Common myeloid progenitor, CD34-positive (primary cell): ENCODE measurements at regions of chr6 and their contacts with region 1.

Region 1: DNA sequence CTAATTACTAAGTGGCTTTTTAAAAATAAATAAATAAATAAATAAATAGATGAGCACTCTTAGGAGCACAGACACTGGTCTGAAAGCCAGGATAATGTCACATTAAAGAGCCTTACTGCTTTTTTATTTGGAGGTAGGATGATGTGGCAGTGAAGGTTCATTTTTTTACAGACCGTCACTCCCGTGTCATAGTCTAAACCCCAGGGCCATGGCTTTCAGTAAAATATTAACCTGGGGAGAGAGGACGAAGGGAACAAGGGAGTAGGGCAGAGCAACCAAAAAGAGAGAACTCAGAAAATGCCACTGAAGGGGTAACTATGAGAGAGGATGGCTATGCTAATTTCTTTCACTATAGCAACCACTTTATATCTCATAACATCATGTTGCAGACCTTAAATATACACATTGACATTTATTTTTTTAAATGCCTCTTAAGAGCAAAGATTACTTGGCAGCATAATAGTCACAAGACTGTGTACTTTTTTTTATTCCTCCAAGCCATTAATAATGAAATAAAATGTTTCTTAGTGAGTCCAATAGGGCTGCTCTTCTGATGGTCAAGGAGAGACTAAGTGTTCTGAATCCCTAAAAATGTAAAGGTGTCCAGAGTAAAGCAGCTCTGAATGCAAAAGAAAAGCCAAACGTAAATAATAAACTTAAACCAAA is 100.9 kb upstream of the SIM1 start:
- DNase-seq: no peak
- H3K4me3 ChIP-seq: no peak overlapping the region
- H3K27ac ChIP-seq: no peak overlapping the region
- H3K4me1 ChIP-seq: no peaks in the 10 kb centered on the region
- H3K27me3 ChIP-seq: no peaks in the 10 kb centered on the region

Region 2: DNA sequence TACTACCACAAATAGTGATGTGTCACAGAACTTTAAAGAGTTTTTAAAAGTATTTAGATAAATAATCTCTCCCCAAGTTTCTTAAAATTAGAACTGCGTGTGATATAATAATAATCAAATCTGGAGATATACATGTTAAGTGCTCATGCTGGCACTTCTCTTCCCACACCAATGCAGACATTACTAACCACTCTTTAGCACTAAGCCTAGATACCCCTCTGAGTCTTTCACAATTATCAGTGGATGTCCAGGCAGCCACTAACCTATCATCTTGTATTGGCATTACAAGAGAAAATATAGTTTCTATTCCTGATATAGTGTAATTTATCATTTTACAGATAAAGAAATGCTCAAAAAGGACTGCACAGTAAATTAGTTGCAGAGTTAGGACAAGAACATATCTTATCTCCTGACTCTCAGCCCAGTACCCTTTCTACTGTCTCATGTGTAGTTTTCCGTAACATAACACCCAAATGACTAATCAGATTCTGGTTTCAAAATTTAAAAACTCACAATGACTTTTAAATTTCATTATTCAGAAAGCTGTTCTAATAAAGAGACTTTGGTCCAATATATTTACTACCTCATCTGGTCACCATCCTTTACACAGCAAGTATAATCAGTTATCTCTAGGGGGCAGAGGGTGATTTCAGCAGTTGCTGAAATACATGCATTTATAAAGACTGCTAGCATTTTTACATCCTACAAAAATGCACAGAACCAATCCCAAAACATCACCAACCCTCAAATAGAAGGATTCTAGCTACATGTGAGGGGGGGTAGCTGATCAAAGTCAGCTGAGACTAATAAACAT is 356.0 kb before region 1 on chr6:
- CTCF ChIA-PET with region 1: no interaction called
- POLR2A ChIA-PET with region 1: no interaction called
- DNase-seq: no peak
- H3K4me3 ChIP-seq: no peak overlapping the region
- H3K27ac ChIP-seq: no peak overlapping the region
- H3K4me1 ChIP-seq: no peaks in the 10 kb centered on the region
- H3K27me3 ChIP-seq: peaks cover 0 to 13% (median 0%) of the 10 kb centered on the region in 5 experiments

Region 3: DNA sequence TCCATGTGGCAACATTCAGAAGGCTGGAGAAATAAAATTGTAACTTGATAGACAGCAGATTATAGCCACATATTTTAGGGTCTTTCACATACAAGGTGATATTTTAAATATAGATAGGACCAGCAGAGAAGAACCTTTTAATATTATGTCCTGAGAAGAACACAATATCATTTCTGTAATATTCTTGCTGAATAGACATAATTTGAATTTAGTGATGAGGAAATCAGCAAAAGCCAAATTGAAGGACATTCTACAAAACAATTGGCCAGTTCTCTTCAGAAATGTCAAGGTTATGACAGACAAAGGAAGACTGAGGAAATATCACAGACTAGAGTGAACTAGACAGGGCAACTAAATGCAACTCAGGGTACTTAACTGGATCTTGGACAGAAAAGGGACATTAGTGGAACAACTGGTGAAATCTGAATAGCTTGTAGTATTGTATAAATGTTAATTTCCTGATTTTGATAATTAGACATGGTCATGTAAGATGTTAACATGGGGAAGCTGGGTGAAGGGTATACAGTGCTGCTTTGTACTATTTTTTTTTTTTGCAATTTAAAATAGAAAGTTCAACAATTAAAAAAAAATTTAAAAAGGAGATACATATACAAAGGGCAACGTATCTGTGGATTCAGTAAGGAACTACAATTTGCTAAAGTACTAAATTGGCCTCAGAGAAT is 33.7 kb after region 1 on chr6:
- CTCF ChIA-PET with region 1: no interaction called
- POLR2A ChIA-PET with region 1: interaction called, 11 read pairs
- DNase-seq: no peak
- H3K4me3 ChIP-seq: no peak overlapping the region
- H3K27ac ChIP-seq: no peak overlapping the region
- H3K4me1 ChIP-seq: peaks cover 0 to 3% (median 0%) of the 10 kb centered on the region in 4 experiments
- H3K27me3 ChIP-seq: no peaks in the 10 kb centered on the region

Region 4: GRCh38 chr6:100768816-100769351 is 203.3 kb after region 1 on chr6:
- CTCF ChIA-PET with region 1: no interaction called
- POLR2A ChIA-PET with region 1: no interaction called
- DNase-seq: no peak
- H3K4me3 ChIP-seq: no peak overlapping the region
- H3K27ac ChIP-seq: no peak overlapping the region
- H3K4me1 ChIP-seq: no peaks in the 10 kb centered on the region
- H3K27me3 ChIP-seq: no peaks in the 10 kb centered on the region